ENCODE measurements at regions of chr12 and their contacts with region 1.

Region 1: GRCh38 chr12:112108201-112109079 is at the start of gene NAA25:
- DNase-seq: peak; percentile 95
- ATAC-seq: peak; percentile 50
- H3K4me3 ChIP-seq: peak within 1 kb of the TSS; percentile 83
- H3K27ac ChIP-seq: peak within 1 kb of the TSS; percentile 88
- H3K4me1 ChIP-seq: peaks cover 41% of the 10 kb centered on the region
- H3K27me3 ChIP-seq: no peaks in the 10 kb centered on the region
- CTCF ChIP-seq: no peak
- total RNA-seq, gene NAA25: 33.3 and 36.6 TPM in 2 replicates

Region 2: GRCh38 chr12:112046003-112046402 is 62.4 kb before region 1 on chr12:
- CTCF ChIA-PET with region 1: no interaction called
- POLR2A ChIA-PET with region 1: no interaction called
- intact Hi-C with region 1: no loop called
- DNase-seq: no peak
- ATAC-seq: no peak; the same call in 1 of the 2 replicates
- H3K4me3 ChIP-seq: no peak overlapping the region
- H3K27ac ChIP-seq: no peak overlapping the region
- H3K4me1 ChIP-seq: no peaks in the 10 kb centered on the region
- H3K27me3 ChIP-seq: no peaks in the 10 kb centered on the region
- CTCF ChIP-seq: no peak

Region 3: DNA sequence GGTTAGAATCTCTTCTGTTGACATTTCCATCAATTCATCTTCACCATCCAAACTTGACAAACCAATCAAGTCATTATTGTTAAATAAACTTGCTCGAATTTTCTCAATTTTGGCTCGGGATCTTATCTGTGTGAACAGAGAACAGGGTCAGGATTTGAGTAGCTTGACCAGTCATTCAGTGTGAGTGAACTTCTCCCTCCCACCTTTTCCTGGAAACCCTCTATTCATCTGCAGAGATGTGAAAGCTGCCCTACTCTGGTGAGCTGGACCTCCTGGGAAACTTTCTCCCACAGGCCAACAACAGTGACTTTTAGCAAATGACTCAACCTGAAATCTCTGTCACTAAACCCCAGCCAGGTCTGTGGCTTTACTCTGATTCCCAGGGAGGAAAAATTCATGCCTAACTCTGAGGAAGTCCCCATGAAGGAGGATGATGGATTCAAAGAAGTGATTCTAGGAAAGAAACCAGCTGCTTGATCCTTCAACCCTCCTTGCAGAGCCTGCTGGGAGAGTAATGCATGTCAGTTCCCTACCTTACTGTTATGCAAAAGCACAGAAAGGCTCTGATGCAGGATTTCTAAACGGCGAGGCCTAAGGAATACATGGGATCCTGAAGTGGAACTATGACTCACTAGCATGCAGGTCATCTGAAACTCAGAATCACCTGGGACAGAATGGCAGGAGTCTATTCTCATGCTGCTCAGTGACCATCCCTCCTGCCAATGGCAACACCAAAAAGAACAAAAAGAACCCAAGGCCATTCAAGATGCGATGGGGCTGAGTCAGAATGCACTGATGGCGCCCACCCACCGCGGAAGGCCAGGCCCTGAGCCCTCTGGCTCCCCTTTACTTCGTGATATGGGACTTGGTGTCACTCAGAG is 74.9 kb after region 1 on chr12:
- CTCF ChIA-PET with region 1: interaction called, 11 read pairs
- POLR2A ChIA-PET with region 1: no interaction called
- intact Hi-C with region 1: no loop called
- DNase-seq: no peak
- ATAC-seq: no peak; the same call in 1 of the 2 replicates
- H3K4me3 ChIP-seq: no peak overlapping the region
- H3K27ac ChIP-seq: no peak overlapping the region
- H3K4me1 ChIP-seq: no peaks in the 10 kb centered on the region
- H3K27me3 ChIP-seq: no peaks in the 10 kb centered on the region
- CTCF ChIP-seq: no peak

Region 4: GRCh38 chr12:112198120-112198733 is 89.8 kb after region 1 on chr12:
- CTCF ChIA-PET with region 1: interaction called, 4 read pairs
- POLR2A ChIA-PET with region 1: interaction called, 15 read pairs
- intact Hi-C with region 1: no loop called
- DNase-seq: peak; percentile 82
- ATAC-seq: peak; percentile 99
- H3K4me3 ChIP-seq: no peak overlapping the region
- H3K27ac ChIP-seq: no peak overlapping the region
- H3K4me1 ChIP-seq: no peaks in the 10 kb centered on the region
- H3K27me3 ChIP-seq: no peaks in the 10 kb centered on the region
- CTCF ChIP-seq: peak; percentile 90